ENCODE measurements at regions of chr12 and their contacts with region 1.

Region 1: GRCh38 chr12:20696181-20696905 is 1.2 kb downstream of the SLCO1C1 start:
- DNase-seq: peak; percentile 50
- H3K4me3 ChIP-seq: peak overlapping the region; percentile 46
- H3K27ac ChIP-seq: peak overlapping the region; percentile 48
- H3K4me1 ChIP-seq: no peaks in the 10 kb centered on the region
- H3K27me3 ChIP-seq: no peaks in the 10 kb centered on the region
- CTCF ChIP-seq: no peak

Region 2: GRCh38 chr12:20643822-20644221 is 52.5 kb before region 1 on chr12:
- intact Hi-C with region 1: loop called (anchors 5 kb)
- DNase-seq: no peak
- H3K4me3 ChIP-seq: no peak overlapping the region
- H3K27ac ChIP-seq: peak overlapping the region; percentile 4
- H3K4me1 ChIP-seq: peaks cover 29% of the 10 kb centered on the region
- H3K27me3 ChIP-seq: no peaks in the 10 kb centered on the region
- CTCF ChIP-seq: no peak

Region 3: GRCh38 chr12:20883288-20883687 is 186.9 kb after region 1 on chr12:
- intact Hi-C with region 1: no loop called
- DNase-seq: no peak
- H3K4me3 ChIP-seq: no peak overlapping the region
- H3K27ac ChIP-seq: no peak overlapping the region
- H3K4me1 ChIP-seq: peaks cover 8% of the 10 kb centered on the region
- H3K27me3 ChIP-seq: no peaks in the 10 kb centered on the region
- CTCF ChIP-seq: no peak

Measured in left ventricle myocardium inferior (tissue), 1 donor.